GM18951 (cell line): ENCODE measurements at regions of chr6 and their contacts with region 1.

Region 1: DNA sequence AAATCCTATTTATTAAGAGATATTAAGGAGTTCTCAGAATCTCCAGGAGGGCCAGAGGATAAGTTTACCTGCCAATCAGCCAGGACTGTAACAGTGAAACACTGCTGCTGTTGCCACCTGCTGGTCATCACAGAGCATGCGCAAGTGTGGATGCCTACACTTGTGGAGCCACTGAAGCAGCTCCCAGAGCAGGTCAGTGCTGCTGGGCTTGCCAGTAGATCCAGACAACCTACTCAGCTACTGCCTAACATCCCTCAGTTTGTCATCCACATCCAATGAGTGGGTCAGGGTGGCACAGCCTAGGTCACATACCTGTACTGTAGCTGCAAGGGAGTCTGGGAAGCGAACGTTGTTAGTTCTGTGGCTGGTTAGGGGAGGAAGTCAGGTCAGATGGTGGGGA is 18.3 kb upstream of the NHSL1 start:
- POLR2A ChIP-seq: no peak

Region 2: GRCh38 chr6:138115877-138116660 is 401.6 kb before region 1 on chr6:
- in situ Hi-C with region 1: loop called (anchors 10 kb)
- POLR2A ChIP-seq: no peak

Region 3: GRCh38 chr6:138387597-138388368 is 129.9 kb before region 1 on chr6:
- in situ Hi-C with region 1: no loop called
- POLR2A ChIP-seq: no peak

Region 4: DNA sequence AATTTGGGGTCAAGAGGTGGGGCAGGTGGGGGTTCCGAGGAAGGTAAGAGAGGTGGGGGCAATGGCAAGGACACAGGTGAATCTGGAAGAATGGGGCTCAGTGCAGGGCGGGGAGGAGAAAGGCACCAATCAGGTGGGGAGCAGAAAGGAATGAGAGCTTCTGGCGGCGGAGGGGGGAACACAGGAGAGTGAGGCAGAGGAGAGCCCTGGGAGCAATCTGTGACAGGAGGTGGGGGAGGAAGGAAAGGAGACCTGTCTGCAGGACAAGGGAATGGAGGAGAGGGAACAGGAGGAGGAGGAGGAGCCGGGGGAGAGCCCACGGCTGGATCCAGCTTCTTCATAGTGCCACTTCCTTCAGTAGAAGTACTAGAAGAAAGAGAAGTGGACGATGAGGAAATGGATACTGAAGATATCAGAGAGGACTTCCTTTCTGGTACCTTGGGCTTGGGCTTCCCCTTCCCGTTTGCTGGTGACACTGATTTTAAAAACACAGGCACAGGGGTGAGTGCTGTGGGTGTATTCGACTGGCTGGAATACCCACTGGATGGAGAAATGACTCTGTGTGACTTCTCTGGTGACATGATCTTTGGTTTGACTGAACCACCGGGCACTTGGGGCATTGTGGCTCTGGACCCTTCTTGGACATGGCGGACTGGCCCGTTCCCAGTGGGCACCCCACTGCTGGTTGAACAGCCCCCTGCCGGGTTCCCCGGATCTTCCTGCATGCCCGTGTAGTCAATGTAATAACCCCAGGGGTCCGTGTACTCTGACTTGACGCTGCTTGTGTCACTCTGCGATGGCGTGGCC is 86.2 kb before region 1 on chr6:
- in situ Hi-C with region 1: loop called (anchors 5 kb)
- POLR2A ChIP-seq: no peak